ENCODE measurements at regions of chrX and their contacts with region 1.

Region 1: GRCh38 chrX:41796577-41796976 is 72.6 kb downstream of the GPR82 start:
- DNase-seq: no peak
- ATAC-seq: peak; percentile 41
- H3K4me3 ChIP-seq: no peak overlapping the region
- H3K27ac ChIP-seq: no peak overlapping the region
- H3K4me1 ChIP-seq: no peaks in the 10 kb centered on the region
- H3K27me3 ChIP-seq: no peaks in the 10 kb centered on the region
- CTCF ChIP-seq: no peak
- EP300 ChIP-seq: 0 out of 4 replicates have a peak, but pooled peaks of 1 of the 2 experiments have one; percentile 31
- POLR2A ChIP-seq: no peak
- RAD21 ChIP-seq: no peak

Region 2: GRCh38 chrX:41837270-41837944 is 40.8 kb after region 1 on chrX:
- CTCF ChIA-PET with region 1: no interaction called
- POLR2A ChIA-PET with region 1: no interaction called
- RAD21 ChIA-PET with region 1: interaction called, 21 read pairs
- SMC1A ChIA-PET with region 1: interaction called, 5 read pairs
- in situ Hi-C with region 1: no loop called
- intact Hi-C with region 1: loop called (anchors 5 kb)
- DNase-seq: no peak
- ATAC-seq: peak; percentile 93
- H3K4me3 ChIP-seq: no peak overlapping the region
- H3K27ac ChIP-seq: no peak overlapping the region
- H3K4me1 ChIP-seq: no peaks in the 10 kb centered on the region
- H3K27me3 ChIP-seq: no peaks in the 10 kb centered on the region
- CTCF ChIP-seq: no peak
- EP300 ChIP-seq: peak; percentile 8 to 61; a peak in 1 of 4 replicates
- POLR2A ChIP-seq: no peak
- RAD21 ChIP-seq: no peak

Region 3: DNA sequence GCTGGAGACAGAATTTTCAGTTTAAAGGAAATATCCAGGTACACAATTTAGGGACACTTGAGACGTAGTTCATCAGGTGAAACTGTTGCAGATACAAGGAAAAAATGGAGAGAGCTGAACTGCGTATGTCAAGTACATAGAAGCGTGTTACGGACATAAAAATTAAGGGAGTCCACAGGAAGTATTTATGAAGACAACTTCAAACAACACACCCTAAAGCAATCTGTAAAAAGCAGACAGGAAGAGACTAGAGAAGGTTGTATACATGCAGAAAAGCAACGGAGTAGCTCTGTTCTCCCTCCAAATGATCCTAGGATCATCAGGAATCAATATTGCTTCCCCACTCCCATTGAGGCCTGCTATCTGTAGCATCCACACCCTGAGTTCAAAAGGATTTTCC is 120.9 kb after region 1 on chrX:
- CTCF ChIA-PET with region 1: interaction called, 14 read pairs
- POLR2A ChIA-PET with region 1: interaction called, 4 read pairs
- RAD21 ChIA-PET with region 1: interaction called, 76 read pairs
- SMC1A ChIA-PET with region 1: interaction called, 38 read pairs
- in situ Hi-C with region 1: no loop called
- intact Hi-C with region 1: loop called (anchors 1 kb)
- DNase-seq: no peak
- ATAC-seq: no peak
- H3K4me3 ChIP-seq: no peak overlapping the region
- H3K27ac ChIP-seq: no peak overlapping the region
- H3K4me1 ChIP-seq: no peaks in the 10 kb centered on the region
- H3K27me3 ChIP-seq: no peaks in the 10 kb centered on the region
- CTCF ChIP-seq: no peak
- EP300 ChIP-seq: no peak
- POLR2A ChIP-seq: no peak
- RAD21 ChIP-seq: no peak

Region 4: DNA sequence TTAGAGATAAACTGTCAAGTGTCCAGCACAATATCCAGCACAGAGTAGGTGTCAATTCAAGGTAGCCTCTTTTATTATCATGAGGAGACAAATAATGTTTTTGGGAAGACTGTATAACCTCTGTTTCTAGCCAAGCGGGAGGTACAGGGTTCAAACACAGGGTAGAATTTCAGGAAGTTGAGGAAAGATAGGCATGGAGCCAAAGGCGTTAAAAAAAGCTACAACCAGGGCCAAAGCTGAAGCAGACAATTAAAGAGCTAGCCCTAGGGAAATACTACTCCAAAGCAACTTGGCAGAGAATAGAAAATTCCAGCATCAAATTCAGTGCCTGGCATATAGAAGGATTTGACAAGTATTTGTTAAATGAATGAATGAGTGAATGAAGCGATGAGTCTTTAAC is 166.8 kb after region 1 on chrX:
- CTCF ChIA-PET with region 1: no interaction called
- POLR2A ChIA-PET with region 1: no interaction called
- RAD21 ChIA-PET with region 1: no interaction called
- SMC1A ChIA-PET with region 1: no interaction called
- in situ Hi-C with region 1: no loop called
- intact Hi-C with region 1: no loop called
- DNase-seq: no peak
- ATAC-seq: no peak
- H3K4me3 ChIP-seq: no peak overlapping the region
- H3K27ac ChIP-seq: no peak overlapping the region
- H3K4me1 ChIP-seq: no peaks in the 10 kb centered on the region
- H3K27me3 ChIP-seq: no peaks in the 10 kb centered on the region
- CTCF ChIP-seq: no peak
- EP300 ChIP-seq: no peak
- POLR2A ChIP-seq: no peak
- RAD21 ChIP-seq: no peak

Region 5: GRCh38 chrX:42128020-42128419 is 331.4 kb after region 1 on chrX:
- CTCF ChIA-PET with region 1: interaction called, 5 read pairs
- POLR2A ChIA-PET with region 1: no interaction called
- RAD21 ChIA-PET with region 1: interaction called, 6 read pairs
- SMC1A ChIA-PET with region 1: interaction called, 3 read pairs
- in situ Hi-C with region 1: no loop called
- intact Hi-C with region 1: loop called (anchors 5 kb)
- DNase-seq: no peak
- ATAC-seq: peak; percentile 84
- H3K4me3 ChIP-seq: no peak overlapping the region
- H3K27ac ChIP-seq: no peak overlapping the region
- H3K4me1 ChIP-seq: no peaks in the 10 kb centered on the region
- H3K27me3 ChIP-seq: no peaks in the 10 kb centered on the region
- CTCF ChIP-seq: no peak
- EP300 ChIP-seq: no peak
- POLR2A ChIP-seq: no peak
- RAD21 ChIP-seq: no peak

Region 6: GRCh38 chrX:42934020-42934726 is 1137.6 kb after region 1 on chrX:
- CTCF ChIA-PET with region 1: no interaction called
- POLR2A ChIA-PET with region 1: no interaction called
- RAD21 ChIA-PET with region 1: no interaction called
- SMC1A ChIA-PET with region 1: no interaction called
- in situ Hi-C with region 1: no loop called
- intact Hi-C with region 1: loop called (anchors 2 kb)
- DNase-seq: peak; percentile 75
- ATAC-seq: peak; percentile 98
- H3K4me3 ChIP-seq: no peak overlapping the region; the same call in 1 of the 2 replicates
- H3K27ac ChIP-seq: peak overlapping the region; percentile 83
- H3K4me1 ChIP-seq: peaks cover 15% of the 10 kb centered on the region
- H3K27me3 ChIP-seq: no peaks in the 10 kb centered on the region
- CTCF ChIP-seq: no peak
- EP300 ChIP-seq: peak in 1 of 2 experiments; percentile 69; a peak in 1 of 4 replicates
- POLR2A ChIP-seq: no peak
- RAD21 ChIP-seq: no peak

Region 7: GRCh38 chrX:43557792-43558191 is 1761.2 kb after region 1 on chrX:
- CTCF ChIA-PET with region 1: interaction called, 4 read pairs
- POLR2A ChIA-PET with region 1: no interaction called
- RAD21 ChIA-PET with region 1: interaction called, 7 read pairs
- SMC1A ChIA-PET with region 1: interaction called, 11 read pairs
- in situ Hi-C with region 1: loop called (anchors 5 kb)
- intact Hi-C with region 1: loop called (anchors 5 kb)
- DNase-seq: peak; percentile 23
- ATAC-seq: peak; percentile 78
- H3K4me3 ChIP-seq: no peak overlapping the region
- H3K27ac ChIP-seq: no peak overlapping the region
- H3K4me1 ChIP-seq: no peaks in the 10 kb centered on the region
- H3K27me3 ChIP-seq: no peaks in the 10 kb centered on the region
- CTCF ChIP-seq: peak; percentile 60 to 83 (median 75); a peak in 5 of 6 replicates
- EP300 ChIP-seq: no peak
- POLR2A ChIP-seq: no peak
- RAD21 ChIP-seq: peak; percentile 90